K562 (cell line): ENCODE measurements at regions of chr17 and their contacts with region 1.

Region 1: DNA sequence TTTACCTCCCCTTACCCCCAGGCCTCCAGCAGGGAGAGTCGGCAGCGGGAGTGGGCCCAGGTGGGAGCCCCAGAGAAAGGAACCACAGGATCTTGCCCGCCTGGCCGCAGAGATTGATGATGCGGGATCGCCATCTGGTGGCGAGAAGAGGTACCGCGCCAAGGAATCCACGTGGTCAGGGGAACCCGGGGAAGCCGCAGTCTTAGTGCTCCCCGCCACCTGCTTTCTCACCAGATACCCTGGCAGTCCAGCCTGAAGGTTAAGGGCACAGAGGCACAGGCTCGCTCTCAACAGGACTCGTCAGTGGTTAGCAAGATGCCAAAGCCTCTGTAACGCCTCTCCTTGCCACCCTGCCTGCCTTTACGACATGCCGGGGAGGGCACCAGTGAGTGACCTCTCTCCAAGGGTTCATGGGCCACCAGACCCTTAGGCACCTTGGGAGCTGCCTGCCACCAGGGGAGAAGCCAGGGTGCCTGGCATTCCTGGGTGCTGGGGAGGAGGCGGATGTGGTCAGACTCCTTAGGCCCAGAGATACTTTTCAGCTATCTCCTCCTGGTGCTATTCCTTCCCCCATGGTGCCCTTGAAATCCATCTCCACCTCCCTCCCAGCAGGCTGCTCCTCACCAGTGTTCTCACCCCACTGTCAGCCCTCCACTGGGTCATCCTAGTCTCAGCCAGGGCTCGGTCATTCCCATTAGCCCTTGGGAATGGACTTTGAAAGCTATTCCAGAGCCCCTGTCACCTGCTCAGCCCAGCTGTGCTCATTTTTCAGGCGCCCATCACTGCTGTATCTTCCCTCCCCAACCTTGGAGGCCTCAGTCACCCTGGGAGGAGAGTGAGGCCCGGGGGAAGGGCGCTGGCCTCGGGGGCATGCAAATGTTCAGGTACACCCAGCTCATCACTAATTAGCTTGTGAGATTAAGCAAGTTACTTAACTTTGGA is 5.5 kb upstream of the RHBDF2 start:
- DNase-seq: peak; percentile 84 to 86 (median 84)
- ATAC-seq: peak; percentile 87
- H3K4me3 ChIP-seq: no peak overlapping the region
- H3K27ac ChIP-seq: no peak overlapping the region
- H3K4me1 ChIP-seq: peaks cover 16 to 17% of the 10 kb centered on the region in 2 experiments; a peak in 4 of 5 replicates
- H3K27me3 ChIP-seq: no peaks in the 10 kb centered on the region
- CTCF ChIP-seq: peak; percentile 92 to 96 (median 93)
- EP300 ChIP-seq: no peak
- POLR2A ChIP-seq: no peak
- RAD21 ChIP-seq: peak; percentile 93 to 98

Region 2: DNA sequence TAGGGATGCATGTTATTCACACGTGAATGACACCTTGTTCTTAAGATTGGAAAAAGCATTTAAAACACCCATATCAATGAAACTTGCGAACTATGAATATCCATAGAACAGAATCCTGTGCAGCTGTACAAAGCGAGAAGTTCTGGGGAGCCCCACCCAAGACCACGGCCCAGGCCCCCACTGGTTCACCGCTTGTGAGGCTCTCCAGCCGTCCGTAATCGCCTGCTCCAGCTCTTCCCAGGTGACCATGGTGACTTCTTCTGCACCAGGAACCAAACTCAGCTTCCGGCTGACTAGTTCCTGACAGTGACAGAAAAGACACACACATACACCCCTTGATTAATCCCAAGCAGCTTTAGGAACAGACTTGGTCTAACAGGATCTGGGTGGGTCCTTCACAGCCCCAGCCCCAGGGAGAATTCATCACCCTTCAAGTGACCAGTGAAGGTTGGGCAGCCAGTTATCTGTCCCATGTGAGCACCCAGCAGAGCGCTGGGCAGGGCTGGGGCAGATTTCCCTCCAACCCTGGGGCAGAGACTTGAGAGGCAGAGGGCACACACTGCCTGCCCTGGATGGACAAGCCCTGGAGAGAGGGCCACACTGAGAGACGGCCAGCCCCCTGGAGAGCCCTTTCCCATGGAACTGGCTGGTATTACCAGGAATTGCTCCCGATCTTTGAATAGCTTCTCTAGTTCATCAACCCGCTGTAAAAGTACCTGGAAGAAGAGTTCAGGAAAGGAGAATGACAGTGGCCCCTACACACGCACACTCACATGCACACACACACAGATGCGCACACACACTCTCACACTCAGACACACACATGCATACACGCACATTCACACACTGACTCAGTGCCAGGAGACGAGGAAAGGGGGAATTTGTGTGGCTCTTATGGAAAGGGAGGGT is 202.2 kb before region 1 on chr17:
- CTCF ChIA-PET with region 1: interaction called, 4 read pairs
- POLR2A ChIA-PET with region 1: no interaction called
- in situ Hi-C with region 1: loop called (anchors 5 kb)
- intact Hi-C with region 1: loop called (anchors 5 kb)
- DNase-seq: no peak
- ATAC-seq: no peak
- H3K4me3 ChIP-seq: no peak overlapping the region
- H3K27ac ChIP-seq: no peak overlapping the region
- H3K4me1 ChIP-seq: peaks cover 0 to 4% of the 10 kb centered on the region in 2 experiments; a peak in 3 of 5 replicates
- H3K27me3 ChIP-seq: no peaks in the 10 kb centered on the region
- CTCF ChIP-seq: no peak
- EP300 ChIP-seq: no peak
- POLR2A ChIP-seq: no peak
- RAD21 ChIP-seq: no peak

Region 3: GRCh38 chr17:76408052-76408849 is 98.4 kb before region 1 on chr17:
- CTCF ChIA-PET with region 1: interaction called, 7 read pairs
- POLR2A ChIA-PET with region 1: no interaction called
- in situ Hi-C with region 1: loop called (anchors 5 kb)
- intact Hi-C with region 1: loop called (anchors 2 kb)
- DNase-seq: peak; percentile 43 to 66 (median 50)
- ATAC-seq: peak; percentile 53
- H3K4me3 ChIP-seq: no peak overlapping the region
- H3K27ac ChIP-seq: no peak overlapping the region
- H3K4me1 ChIP-seq: peaks cover 16 to 30% of the 10 kb centered on the region in 2 experiments
- H3K27me3 ChIP-seq: no peaks in the 10 kb centered on the region
- CTCF ChIP-seq: peak; percentile 82 to 83 (median 82)
- EP300 ChIP-seq: no peak
- POLR2A ChIP-seq: no peak
- RAD21 ChIP-seq: peak; percentile 45 to 76; a peak in 3 of 4 replicates

Region 4: GRCh38 chr17:76458580-76459490 is 47.8 kb before region 1 on chr17:
- CTCF ChIA-PET with region 1: interaction called, 100 read pairs
- POLR2A ChIA-PET with region 1: interaction called, 3 read pairs
- in situ Hi-C with region 1: no loop called
- intact Hi-C with region 1: loop called (anchors 1 kb)
- DNase-seq: peak; percentile 52 to 84 (median 70)
- ATAC-seq: peak; percentile 98
- H3K4me3 ChIP-seq: no peak overlapping the region
- H3K27ac ChIP-seq: no peak overlapping the region
- H3K4me1 ChIP-seq: peaks cover 0 to 8% of the 10 kb centered on the region in 2 experiments; a peak in 3 of 5 replicates
- H3K27me3 ChIP-seq: peaks cover 4 to 15% of the 10 kb centered on the region in 2 experiments; a peak in 2 of 5 replicates
- CTCF ChIP-seq: peak; percentile 82 to 92 (median 89)
- EP300 ChIP-seq: no peak
- POLR2A ChIP-seq: no peak
- RAD21 ChIP-seq: peak; percentile 75 to 92

Region 5: DNA sequence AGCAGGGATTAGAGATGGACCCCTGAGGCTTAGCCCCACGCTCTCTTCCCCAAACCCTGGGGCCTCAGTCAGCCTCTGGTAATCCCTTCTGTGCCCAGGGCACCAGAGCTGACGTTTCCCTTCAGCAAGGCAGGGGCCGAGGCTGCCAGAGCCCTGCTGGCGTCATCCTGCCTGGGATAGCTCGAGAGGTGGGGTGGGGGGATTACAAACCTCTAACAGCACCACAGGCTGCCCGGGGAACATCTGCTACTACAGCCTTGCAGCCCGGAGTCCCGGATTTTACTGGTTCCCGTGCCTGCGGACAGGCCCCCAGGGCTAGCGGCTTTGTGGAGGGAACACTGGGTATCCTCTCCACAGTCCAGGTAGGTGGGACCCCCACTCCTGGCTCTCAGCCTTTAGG is 39.3 kb before region 1 on chr17 and contains the start of gene AANAT:
- CTCF ChIA-PET with region 1: interaction called, 100 read pairs
- POLR2A ChIA-PET with region 1: interaction called, 3 read pairs
- in situ Hi-C with region 1: loop called (anchors 5 kb)
- intact Hi-C with region 1: loop called (anchors 1 kb)
- DNase-seq: no peak
- ATAC-seq: no peak
- H3K4me3 ChIP-seq: no peak within 1 kb of the TSS
- H3K27ac ChIP-seq: no peak within 1 kb of the TSS
- H3K4me1 ChIP-seq: peaks cover 0 to 36% of the 10 kb centered on the region in 2 experiments; a peak in 2 of 5 replicates
- H3K27me3 ChIP-seq: peaks cover 6 to 47% of the 10 kb centered on the region in 2 experiments; a peak in 3 of 5 replicates
- CTCF ChIP-seq: no peak
- EP300 ChIP-seq: no peak
- POLR2A ChIP-seq: no peak
- RAD21 ChIP-seq: no peak
- polyA plus RNA-seq, gene AANAT: not detected

Region 6: DNA sequence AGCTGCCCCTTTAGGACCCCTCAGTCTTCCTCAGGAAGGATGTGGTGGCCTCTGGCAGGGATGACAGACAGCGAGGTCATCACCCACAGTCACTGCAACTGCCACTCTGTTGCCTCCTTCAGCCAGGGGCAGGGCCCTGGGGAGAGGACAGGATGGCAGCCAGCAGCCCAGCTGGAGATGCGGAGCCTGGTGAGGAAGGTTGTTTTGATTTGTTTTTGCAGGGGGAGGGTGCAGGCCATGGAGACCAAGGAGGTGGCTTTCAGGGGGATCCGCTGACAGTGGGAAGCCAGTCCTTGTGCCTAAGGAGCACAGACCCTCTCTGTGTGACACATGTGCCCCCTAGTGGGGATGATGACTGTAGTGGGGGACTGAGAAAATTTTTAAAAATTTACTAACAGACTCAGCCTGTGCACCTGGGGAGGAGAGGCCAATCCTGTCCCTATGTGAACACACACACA is 40.5 kb after region 1 on chr17:
- CTCF ChIA-PET with region 1: interaction called, 3 read pairs
- POLR2A ChIA-PET with region 1: interaction called, 3 read pairs
- in situ Hi-C with region 1: no loop called
- intact Hi-C with region 1: loop called (anchors 5 kb)
- DNase-seq: peak; percentile 70 to 82 (median 74)
- ATAC-seq: peak; percentile 94
- H3K4me3 ChIP-seq: no peak overlapping the region
- H3K27ac ChIP-seq: no peak overlapping the region
- H3K4me1 ChIP-seq: peaks cover 0 to 39% of the 10 kb centered on the region in 2 experiments; a peak in 3 of 5 replicates
- H3K27me3 ChIP-seq: no peaks in the 10 kb centered on the region
- CTCF ChIP-seq: peak; percentile 84 to 88 (median 86)
- EP300 ChIP-seq: no peak
- POLR2A ChIP-seq: no peak
- RAD21 ChIP-seq: peak; percentile 72 to 90

Region 7: GRCh38 chr17:76641501-76641900 is 134.8 kb after region 1 on chr17:
- CTCF ChIA-PET with region 1: no interaction called
- POLR2A ChIA-PET with region 1: no interaction called
- in situ Hi-C with region 1: no loop called
- intact Hi-C with region 1: no loop called
- DNase-seq: peak in 1 of 4 experiments; percentile 64
- ATAC-seq: peak; percentile 15
- H3K4me3 ChIP-seq: peak overlapping the region; percentile 40
- H3K27ac ChIP-seq: peak overlapping the region; percentile 94
- H3K4me1 ChIP-seq: peaks cover 34 to 41% of the 10 kb centered on the region in 2 experiments; a peak in 4 of 5 replicates
- H3K27me3 ChIP-seq: no peaks in the 10 kb centered on the region
- CTCF ChIP-seq: no peak
- EP300 ChIP-seq: peak; percentile 61; the same call in 1 of the 2 replicates
- POLR2A ChIP-seq: no peak
- RAD21 ChIP-seq: no peak

Region 8: DNA sequence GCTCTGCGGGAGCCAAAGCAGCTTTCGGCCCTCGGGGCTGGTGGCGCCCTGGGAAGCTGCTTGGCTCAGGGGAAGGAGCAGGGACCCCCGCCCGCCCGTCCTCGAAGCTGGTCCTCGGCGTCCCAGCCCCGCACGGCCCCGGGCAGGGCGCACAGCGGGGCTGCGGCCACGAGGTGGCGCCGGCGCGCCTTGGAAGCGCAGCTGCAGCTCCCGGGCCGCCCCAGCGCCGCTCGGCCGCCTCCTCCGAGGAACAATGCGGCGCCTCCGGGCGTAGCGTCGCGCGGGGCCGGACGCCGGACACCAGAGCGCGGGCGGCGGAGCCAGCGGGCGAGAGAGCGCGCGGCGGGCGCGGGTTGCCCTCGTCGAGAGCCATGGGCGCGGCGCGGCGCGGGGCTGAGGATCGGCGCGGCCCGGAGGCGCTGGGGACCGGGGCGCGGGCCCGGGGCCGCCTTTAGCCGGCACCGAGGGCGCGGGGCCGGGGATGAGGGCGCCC is 361.5 kb after region 1 on chr17 and contains the start of gene MGAT5B:
- CTCF ChIA-PET with region 1: no interaction called
- POLR2A ChIA-PET with region 1: no interaction called
- in situ Hi-C with region 1: no loop called
- intact Hi-C with region 1: no loop called
- DNase-seq: peak; percentile 88 to 94 (median 93)
- ATAC-seq: peak; percentile 99
- H3K4me3 ChIP-seq: peak within 1 kb of the TSS; percentile 23
- H3K27ac ChIP-seq: no peak within 1 kb of the TSS
- H3K4me1 ChIP-seq: peaks cover 6 to 45% of the 10 kb centered on the region in 2 experiments; a peak in 3 of 5 replicates
- H3K27me3 ChIP-seq: peaks cover 0 to 19% of the 10 kb centered on the region in 2 experiments; a peak in 2 of 5 replicates
- CTCF ChIP-seq: peak; percentile 66 to 94 (median 86)
- EP300 ChIP-seq: no peak
- POLR2A ChIP-seq: no peak
- RAD21 ChIP-seq: peak; percentile 86 to 94
- polyA plus RNA-seq, gene MGAT5B: not detected